ENCODE measurements at regions of chr3 and their contacts with region 1.

Region 1: DNA sequence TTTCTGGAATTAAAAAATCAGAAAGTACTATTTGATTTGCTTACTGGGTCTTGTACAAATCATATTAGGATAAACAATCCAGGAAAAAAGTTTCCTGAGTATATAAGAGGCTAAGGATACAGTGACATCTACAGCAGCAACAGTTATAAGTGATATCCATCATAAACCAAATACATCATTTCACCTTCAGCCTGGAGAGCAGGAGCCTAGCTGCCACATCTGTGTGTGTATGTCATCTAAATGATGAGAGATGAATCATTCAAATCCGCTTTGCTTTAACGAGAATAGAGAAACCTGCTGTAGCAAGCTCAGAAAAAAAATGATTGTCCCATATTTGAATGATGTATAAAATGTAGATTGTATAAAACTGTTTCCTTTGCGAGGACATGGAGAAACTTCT is 841.5 kb downstream of the SI start:
- DNase-seq: no peak
- ATAC-seq: no peak
- H3K4me3 ChIP-seq: no peak overlapping the region
- H3K4me3 Mint-ChIP-seq: no peak overlapping the region
- H3K27ac ChIP-seq: no peak overlapping the region
- H3K27ac Mint-ChIP-seq: no peak overlapping the region
- H3K4me1 ChIP-seq: no peaks in the 10 kb centered on the region
- H3K4me1 Mint-ChIP-seq: no peaks in the 10 kb centered on the region
- H3K27me3 ChIP-seq: no peaks in the 10 kb centered on the region
- H3K27me3 Mint-ChIP-seq: no peaks in the 10 kb centered on the region
- CTCF ChIP-seq: no peak

Region 2: GRCh38 chr3:164155400-164155799 is 81.4 kb before region 1 on chr3:
- CTCF ChIA-PET with region 1: no interaction called
- POLR2A ChIA-PET with region 1: no interaction called
- intact Hi-C with region 1: no loop called
- DNase-seq: no peak
- ATAC-seq: no peak
- H3K4me3 ChIP-seq: no peak overlapping the region
- H3K4me3 Mint-ChIP-seq: no peak overlapping the region
- H3K27ac ChIP-seq: no peak overlapping the region
- H3K27ac Mint-ChIP-seq: no peak overlapping the region
- H3K4me1 ChIP-seq: no peaks in the 10 kb centered on the region
- H3K4me1 Mint-ChIP-seq: no peaks in the 10 kb centered on the region
- H3K27me3 ChIP-seq: no peaks in the 10 kb centered on the region
- H3K27me3 Mint-ChIP-seq: no peaks in the 10 kb centered on the region
- CTCF ChIP-seq: no peak

Region 3: GRCh38 chr3:164222197-164222596 is 14.6 kb before region 1 on chr3:
- CTCF ChIA-PET with region 1: no interaction called
- POLR2A ChIA-PET with region 1: no interaction called
- intact Hi-C with region 1: no loop called
- DNase-seq: no peak
- ATAC-seq: no peak
- H3K4me3 ChIP-seq: no peak overlapping the region
- H3K4me3 Mint-ChIP-seq: no peak overlapping the region
- H3K27ac ChIP-seq: no peak overlapping the region
- H3K27ac Mint-ChIP-seq: no peak overlapping the region
- H3K4me1 ChIP-seq: no peaks in the 10 kb centered on the region
- H3K4me1 Mint-ChIP-seq: no peaks in the 10 kb centered on the region
- H3K27me3 ChIP-seq: no peaks in the 10 kb centered on the region
- H3K27me3 Mint-ChIP-seq: no peaks in the 10 kb centered on the region
- CTCF ChIP-seq: no peak

Region 4: DNA sequence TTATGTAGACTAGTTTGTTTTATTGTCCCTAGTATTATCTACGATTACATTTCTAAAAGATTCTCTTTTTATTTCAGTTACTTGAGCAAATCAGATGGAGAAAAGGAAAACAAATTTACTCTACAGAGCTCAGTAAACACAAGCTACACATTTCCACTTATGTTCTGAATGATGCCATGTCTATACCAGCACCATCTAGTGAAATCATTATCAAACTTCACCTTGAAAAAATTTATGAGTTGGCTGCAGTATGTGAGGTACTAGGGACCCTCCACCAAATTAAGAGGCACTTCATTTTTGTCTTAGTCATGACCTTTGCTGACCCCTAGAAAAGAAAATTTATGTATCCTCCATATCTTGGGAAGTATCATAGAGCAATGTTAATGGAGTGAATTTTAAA is 14.1 kb after region 1 on chr3:
- CTCF ChIA-PET with region 1: no interaction called
- POLR2A ChIA-PET with region 1: no interaction called
- intact Hi-C with region 1: loop called in 1 of 2 experiments (anchors 1 kb)
- DNase-seq: no peak
- ATAC-seq: no peak
- H3K4me3 ChIP-seq: no peak overlapping the region
- H3K4me3 Mint-ChIP-seq: no peak overlapping the region
- H3K27ac ChIP-seq: no peak overlapping the region
- H3K27ac Mint-ChIP-seq: no peak overlapping the region
- H3K4me1 ChIP-seq: no peaks in the 10 kb centered on the region
- H3K4me1 Mint-ChIP-seq: no peaks in the 10 kb centered on the region
- H3K27me3 ChIP-seq: no peaks in the 10 kb centered on the region
- H3K27me3 Mint-ChIP-seq: no peaks in the 10 kb centered on the region
- CTCF ChIP-seq: no peak

Region 5: GRCh38 chr3:165696496-165696895 is 1459.7 kb after region 1 on chr3:
- CTCF ChIA-PET with region 1: no interaction called
- POLR2A ChIA-PET with region 1: no interaction called
- intact Hi-C with region 1: no loop called
- DNase-seq: no peak
- ATAC-seq: no peak
- H3K4me3 ChIP-seq: no peak overlapping the region
- H3K4me3 Mint-ChIP-seq: no peak overlapping the region
- H3K27ac ChIP-seq: no peak overlapping the region
- H3K27ac Mint-ChIP-seq: no peak overlapping the region
- H3K4me1 ChIP-seq: no peaks in the 10 kb centered on the region
- H3K4me1 Mint-ChIP-seq: no peaks in the 10 kb centered on the region
- H3K27me3 ChIP-seq: no peaks in the 10 kb centered on the region
- H3K27me3 Mint-ChIP-seq: no peaks in the 10 kb centered on the region
- CTCF ChIP-seq: no peak